CD4-positive, alpha-beta T cell (primary cell): ENCODE measurements at regions of chr20 and their contacts with region 1.

Region 1: GRCh38 chr20:57391074-57391554 is at the start of gene RBM38:
- DNase-seq: peak; percentile 55 to 89 (median 72)
- ATAC-seq: peak; percentile 51
- H3K4me3 ChIP-seq: peak within 1 kb of the TSS; percentile 72
- H3K4me3 Mint-ChIP-seq: peak within 1 kb of the TSS; percentile 99
- H3K27ac ChIP-seq: peak within 1 kb of the TSS; percentile 83 to 88
- H3K27ac Mint-ChIP-seq: peak within 1 kb of the TSS; percentile 96
- H3K4me1 ChIP-seq: peaks cover 63% of the 10 kb centered on the region
- H3K4me1 Mint-ChIP-seq: peaks cover 53% of the 10 kb centered on the region
- H3K27me3 ChIP-seq: no peaks in the 10 kb centered on the region
- H3K27me3 Mint-ChIP-seq: peaks cover 6% of the 10 kb centered on the region
- CTCF ChIP-seq: no peak
- total RNA-seq, gene RBM38: 604 to 645 TPM

Region 2: GRCh38 chr20:57351042-57351783 is 39.9 kb before region 1 on chr20 and contains the start of gene RAE1:
- CTCF ChIA-PET with region 1: no interaction called
- POLR2A ChIA-PET with region 1: interaction called, 3 read pairs
- intact Hi-C with region 1: loop called in 1 of 2 experiments (anchors 2 kb)
- DNase-seq: peak; percentile 82 to 97 (median 89)
- ATAC-seq: peak; percentile 82
- H3K4me3 ChIP-seq: peak within 1 kb of the TSS; percentile 98
- H3K4me3 Mint-ChIP-seq: peak within 1 kb of the TSS; percentile 94
- H3K27ac ChIP-seq: peak within 1 kb of the TSS; percentile 73 to 74
- H3K27ac Mint-ChIP-seq: peak within 1 kb of the TSS; percentile 89
- H3K4me1 ChIP-seq: peaks cover 21% of the 10 kb centered on the region
- H3K4me1 Mint-ChIP-seq: peaks cover 55% of the 10 kb centered on the region
- H3K27me3 ChIP-seq: no peaks in the 10 kb centered on the region
- H3K27me3 Mint-ChIP-seq: no peaks in the 10 kb centered on the region
- CTCF ChIP-seq: no peak
- total RNA-seq, gene RAE1: 58.8 to 60.7 TPM

Region 3: DNA sequence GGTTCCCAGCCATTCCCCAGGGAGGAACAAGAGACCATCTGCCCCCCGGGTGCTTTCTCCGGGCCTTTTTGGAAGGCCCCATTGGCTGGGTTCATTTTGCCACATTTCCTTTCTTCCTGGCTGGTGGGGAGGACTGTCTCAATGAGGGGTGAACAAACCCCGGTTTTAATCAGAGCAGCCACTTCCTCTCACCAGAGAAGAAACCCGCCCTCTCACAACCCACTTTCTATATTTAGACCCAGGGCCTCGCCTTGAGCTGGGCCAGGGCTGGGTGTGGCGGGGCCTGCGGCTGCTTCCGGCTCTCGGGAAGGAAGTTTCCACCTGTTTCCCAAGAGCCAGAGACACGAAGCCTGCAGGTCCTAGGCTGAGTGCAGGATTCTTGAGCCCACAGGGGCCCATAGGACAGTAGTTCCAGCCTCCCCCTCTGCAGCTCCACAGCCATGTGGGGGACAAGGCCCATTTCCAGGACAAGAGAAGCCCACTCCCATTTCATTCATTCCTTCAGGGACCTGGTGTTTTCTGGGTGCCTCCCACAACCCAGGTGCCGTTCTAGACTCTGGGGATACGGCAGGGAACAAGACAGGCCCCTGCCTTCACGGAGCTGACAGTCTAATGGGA is 41.9 kb after region 1 on chr20:
- CTCF ChIA-PET with region 1: interaction called, 10 read pairs
- POLR2A ChIA-PET with region 1: interaction called, 150 read pairs
- intact Hi-C with region 1: loop called in 1 of 2 experiments (anchors 2 kb)
- DNase-seq: peak in 13 of 14 experiments; percentile 30 to 94 (median 64)
- ATAC-seq: peak; percentile 89
- H3K4me3 ChIP-seq: no peak overlapping the region
- H3K4me3 Mint-ChIP-seq: peak overlapping the region; percentile 81
- H3K27ac ChIP-seq: peak overlapping the region; percentile 56 to 72
- H3K27ac Mint-ChIP-seq: peak overlapping the region; percentile 88
- H3K4me1 ChIP-seq: peaks cover 79% of the 10 kb centered on the region
- H3K4me1 Mint-ChIP-seq: peaks cover 67% of the 10 kb centered on the region
- H3K27me3 ChIP-seq: no peaks in the 10 kb centered on the region
- H3K27me3 Mint-ChIP-seq: no peaks in the 10 kb centered on the region
- CTCF ChIP-seq: no peak

Region 4: GRCh38 chr20:57628047-57628961 is 237.2 kb after region 1 on chr20:
- CTCF ChIA-PET with region 1: no interaction called
- POLR2A ChIA-PET with region 1: interaction called, 32 read pairs
- intact Hi-C with region 1: loop called in 1 of 2 experiments (anchors 5 kb)
- DNase-seq: peak in 13 of 14 experiments; percentile 43 to 88 (median 62)
- ATAC-seq: peak; percentile 79
- H3K4me3 ChIP-seq: peak overlapping the region; percentile 40
- H3K4me3 Mint-ChIP-seq: peak overlapping the region; percentile 83
- H3K27ac ChIP-seq: peak overlapping the region; percentile 80 to 88
- H3K27ac Mint-ChIP-seq: peak overlapping the region; percentile 94
- H3K4me1 ChIP-seq: peaks cover 43% of the 10 kb centered on the region
- H3K4me1 Mint-ChIP-seq: peaks cover 90% of the 10 kb centered on the region
- H3K27me3 ChIP-seq: no peaks in the 10 kb centered on the region
- H3K27me3 Mint-ChIP-seq: no peaks in the 10 kb centered on the region
- CTCF ChIP-seq: no peak

Region 5: DNA sequence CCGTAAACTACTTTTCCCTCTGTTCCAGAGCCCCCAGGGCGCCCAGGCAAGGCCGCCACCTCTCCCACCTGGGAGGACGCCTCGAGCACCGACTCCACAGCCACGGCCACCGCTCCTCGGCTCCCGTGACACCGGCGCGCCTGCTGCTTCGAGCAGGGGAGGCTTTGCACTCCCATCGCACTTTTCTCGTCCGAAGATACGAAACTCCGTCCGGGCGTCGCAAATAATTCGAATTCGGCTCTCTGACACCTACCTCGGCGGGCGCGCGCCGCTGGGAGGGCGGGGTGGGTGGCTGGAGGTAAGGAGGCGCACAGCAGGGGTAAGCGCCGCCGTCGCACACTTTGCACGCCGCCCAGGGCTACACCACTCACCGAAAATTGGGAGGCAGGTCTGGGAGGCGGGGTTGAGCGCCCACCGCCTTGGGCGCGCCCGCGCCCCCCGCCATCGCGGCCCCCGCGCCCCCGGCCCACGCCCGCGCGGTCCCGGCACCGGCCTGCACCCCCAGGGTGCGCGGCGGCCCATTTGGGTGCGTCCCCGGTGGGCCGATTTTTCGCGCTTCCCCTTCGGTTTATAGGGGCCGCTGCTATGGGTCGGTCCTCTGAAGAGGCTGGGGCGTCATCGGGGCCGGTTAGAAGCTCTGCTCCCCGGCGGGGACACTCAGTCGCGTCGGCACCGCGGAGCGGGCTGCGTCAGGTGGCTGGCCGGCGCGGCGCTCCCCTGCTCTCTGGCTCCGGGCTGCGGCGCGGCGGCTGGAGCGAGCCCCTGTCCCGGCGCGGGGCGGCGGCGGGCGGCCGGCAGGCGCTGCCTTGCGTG is 1497.6 kb after region 1 on chr20:
- CTCF ChIA-PET with region 1: no interaction called
- POLR2A ChIA-PET with region 1: no interaction called
- intact Hi-C with region 1: loop called in 1 of 2 experiments (anchors 5 kb)
- DNase-seq: peak; percentile 69 to 93 (median 82)
- ATAC-seq: peak; percentile 49
- H3K4me3 ChIP-seq: peak overlapping the region; percentile 83
- H3K4me3 Mint-ChIP-seq: peak overlapping the region; percentile 89
- H3K27ac ChIP-seq: peak overlapping the region; percentile 65 to 72
- H3K27ac Mint-ChIP-seq: peak overlapping the region; percentile 95
- H3K4me1 ChIP-seq: peaks cover 11% of the 10 kb centered on the region
- H3K4me1 Mint-ChIP-seq: peaks cover 52% of the 10 kb centered on the region
- H3K27me3 ChIP-seq: no peaks in the 10 kb centered on the region
- H3K27me3 Mint-ChIP-seq: no peaks in the 10 kb centered on the region
- CTCF ChIP-seq: no peak